CD4-positive, alpha-beta memory T cell (primary cell): ENCODE measurements at regions of chr13 and their contacts with region 1.

Region 1: GRCh38 chr13:79336966-79337365 is 69.1 kb downstream of the RBM26 start:
- DNase-seq: no peak
- H3K4me3 ChIP-seq: no peak overlapping the region
- H3K4me3 Mint-ChIP-seq: no peak overlapping the region
- H3K27ac ChIP-seq: no peak overlapping the region
- H3K27ac Mint-ChIP-seq: no peak overlapping the region
- H3K4me1 ChIP-seq: no peaks in the 10 kb centered on the region
- H3K4me1 Mint-ChIP-seq: peaks cover 0 to 5% (median 3%) of the 10 kb centered on the region in 4 donors
- H3K27me3 ChIP-seq: no peaks in the 10 kb centered on the region
- H3K27me3 Mint-ChIP-seq: no peaks in the 10 kb centered on the region

Region 2: GRCh38 chr13:79360095-79360494 is 23.1 kb after region 1 on chr13:
- CTCF ChIA-PET with region 1: no interaction called
- POLR2A ChIA-PET with region 1: no interaction called
- intact Hi-C with region 1: loop called (anchors 2 kb)
- DNase-seq: no peak
- H3K4me3 ChIP-seq: no peak overlapping the region
- H3K4me3 Mint-ChIP-seq: no peak overlapping the region
- H3K27ac ChIP-seq: no peak overlapping the region
- H3K27ac Mint-ChIP-seq: no peak overlapping the region
- H3K4me1 ChIP-seq: no peaks in the 10 kb centered on the region
- H3K4me1 Mint-ChIP-seq: peaks cover 8 to 15% (median 10%) of the 10 kb centered on the region in 4 donors
- H3K27me3 ChIP-seq: no peaks in the 10 kb centered on the region
- H3K27me3 Mint-ChIP-seq: no peaks in the 10 kb centered on the region